A549 (cell line): ENCODE measurements at regions of chr17 and their contacts with region 1.

Region 1: DNA sequence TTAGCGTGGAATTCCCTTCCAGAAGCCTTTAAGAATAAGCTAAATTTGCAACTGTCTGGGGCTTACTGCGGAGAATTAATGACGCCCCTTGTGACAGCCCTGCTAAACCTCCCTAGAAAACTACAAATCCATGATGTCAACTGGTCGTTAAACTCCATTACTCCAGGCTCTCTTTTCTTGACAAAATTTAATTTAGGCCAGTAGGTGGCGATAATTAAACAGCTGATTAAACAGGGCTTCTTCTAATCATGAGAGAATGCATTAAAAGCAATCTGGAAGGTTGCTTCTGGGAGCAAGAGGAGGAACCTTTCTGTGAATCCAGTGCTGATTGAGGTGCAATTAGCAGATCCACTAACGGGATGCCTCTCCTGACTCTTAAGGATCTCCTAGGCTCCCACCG is 8.1 kb upstream of the NLRP1 start:
- DNase-seq: peak; percentile 49 to 53
- ATAC-seq: peak; percentile 45 to 70; a peak in 3 of 6 replicates
- H3K4me3 ChIP-seq: no peak overlapping the region
- H3K27ac ChIP-seq: no peak overlapping the region
- H3K4me1 ChIP-seq: no peaks in the 10 kb centered on the region
- CTCF ChIP-seq: peak; percentile 87
- EP300 ChIP-seq: no peak
- POLR2A ChIP-seq: no peak
- RAD21 ChIP-seq: peak; percentile 80 to 86

Region 2: DNA sequence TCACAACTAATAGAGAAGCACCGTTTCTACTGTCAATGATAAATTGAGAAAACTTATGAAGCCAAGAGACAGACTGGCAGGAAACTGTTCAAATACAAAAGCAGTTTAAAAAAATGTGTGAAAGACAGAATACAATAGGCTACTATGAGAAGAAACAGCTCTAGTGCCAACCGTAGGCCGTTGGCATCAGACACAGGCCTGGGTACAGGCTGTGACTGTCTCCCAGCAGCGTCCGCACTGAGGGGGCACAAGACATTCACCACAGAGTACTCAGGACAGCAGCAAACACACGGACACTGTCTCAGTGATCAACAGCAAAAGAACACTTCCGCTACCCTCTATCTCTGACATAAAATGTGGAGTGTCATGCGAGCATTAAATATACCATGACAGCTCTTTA is 145.6 kb before region 1 on chr17:
- CTCF ChIA-PET with region 1: no interaction called
- POLR2A ChIA-PET with region 1: no interaction called
- DNase-seq: no peak
- ATAC-seq: no peak
- H3K4me3 ChIP-seq: no peak overlapping the region
- H3K27ac ChIP-seq: no peak overlapping the region
- H3K4me1 ChIP-seq: no peaks in the 10 kb centered on the region
- CTCF ChIP-seq: no peak
- EP300 ChIP-seq: no peak
- POLR2A ChIP-seq: no peak
- RAD21 ChIP-seq: no peak

Region 3: DNA sequence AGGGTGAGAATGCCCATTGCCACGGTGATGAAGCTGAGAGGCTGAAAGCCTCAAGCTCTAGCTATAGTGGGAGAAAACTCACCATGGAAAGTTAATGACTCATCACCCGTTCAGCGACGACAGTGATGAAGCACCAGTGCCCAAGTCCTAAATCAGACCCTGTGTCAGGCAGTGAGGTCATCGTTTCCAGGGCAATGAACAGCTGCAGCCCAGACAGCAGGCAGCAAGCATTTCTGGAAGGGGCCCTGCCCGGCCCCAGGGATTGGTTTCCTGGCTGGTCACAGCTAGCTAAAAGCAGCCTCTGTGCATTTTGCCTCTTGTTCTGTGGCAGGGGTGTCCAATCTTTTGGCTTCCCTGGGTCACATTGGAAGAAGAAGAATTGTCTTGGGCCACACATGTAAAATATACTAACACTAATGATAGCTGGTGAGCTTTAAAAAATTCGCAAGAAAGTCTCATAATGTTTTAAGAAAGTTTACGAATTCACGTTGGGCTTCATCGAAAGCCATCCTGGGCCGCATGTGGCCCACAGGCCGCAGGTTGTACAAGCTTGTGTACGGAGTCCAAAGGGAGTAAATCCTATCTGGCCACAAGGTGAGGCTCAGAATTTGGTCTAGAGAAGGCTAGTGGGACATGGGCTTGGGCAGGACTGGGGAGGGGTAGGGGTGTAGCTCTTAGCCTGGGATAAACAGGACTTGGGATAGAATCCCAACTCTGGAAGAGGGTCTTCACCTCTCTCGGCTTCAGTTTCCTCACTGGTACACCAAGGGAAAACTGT is 65.4 kb before region 1 on chr17:
- CTCF ChIA-PET with region 1: interaction called, 11 read pairs
- POLR2A ChIA-PET with region 1: no interaction called
- DNase-seq: peak; percentile 81 to 90
- ATAC-seq: peak; percentile 90 to 93
- H3K4me3 ChIP-seq: no peak overlapping the region
- H3K27ac ChIP-seq: peak overlapping the region; percentile 41 to 68; a peak in 5 of 6 replicates
- H3K4me1 ChIP-seq: peaks cover 17% of the 10 kb centered on the region
- CTCF ChIP-seq: no peak
- EP300 ChIP-seq: no peak
- POLR2A ChIP-seq: no peak
- RAD21 ChIP-seq: no peak

Region 4: GRCh38 chr17:5610956-5611355 is 18.6 kb after region 1 on chr17:
- CTCF ChIA-PET with region 1: interaction called, 36 read pairs
- POLR2A ChIA-PET with region 1: no interaction called
- DNase-seq: no peak
- ATAC-seq: no peak
- H3K4me3 ChIP-seq: no peak overlapping the region
- H3K27ac ChIP-seq: no peak overlapping the region
- H3K4me1 ChIP-seq: no peaks in the 10 kb centered on the region
- CTCF ChIP-seq: no peak
- EP300 ChIP-seq: no peak
- POLR2A ChIP-seq: no peak
- RAD21 ChIP-seq: no peak

Region 5: DNA sequence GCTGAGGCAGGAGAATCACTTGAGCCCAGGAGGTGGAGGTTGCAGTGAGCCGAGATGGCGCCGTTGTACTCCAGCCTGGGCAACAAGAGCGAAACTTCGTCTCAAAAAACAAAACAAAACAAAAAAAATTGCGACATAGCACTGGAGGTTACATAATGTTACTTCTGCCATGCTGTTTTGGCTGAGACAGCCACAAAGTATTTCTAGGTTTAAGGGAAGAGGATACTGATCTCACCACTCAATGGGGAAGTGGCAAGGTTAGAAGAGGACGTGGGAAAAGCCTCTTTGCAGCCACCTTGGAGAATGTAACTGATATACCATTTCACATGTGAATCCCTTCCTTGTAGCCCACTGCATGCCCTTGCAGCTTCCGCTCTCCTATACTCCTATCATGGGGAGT is 123.1 kb after region 1 on chr17:
- CTCF ChIA-PET with region 1: no interaction called
- POLR2A ChIA-PET with region 1: no interaction called
- DNase-seq: no peak
- ATAC-seq: no peak
- H3K4me3 ChIP-seq: no peak overlapping the region
- H3K27ac ChIP-seq: no peak overlapping the region
- H3K4me1 ChIP-seq: peaks cover 10% of the 10 kb centered on the region; the same call in 2 of the 3 replicates
- CTCF ChIP-seq: no peak
- EP300 ChIP-seq: no peak
- POLR2A ChIP-seq: no peak
- RAD21 ChIP-seq: no peak

Region 6: GRCh38 chr17:6069539-6070429 is 477.4 kb after region 1 on chr17 and contains the start of gene WSCD1:
- CTCF ChIA-PET with region 1: interaction called, 12 read pairs
- POLR2A ChIA-PET with region 1: no interaction called
- DNase-seq: peak; percentile 21 to 57
- ATAC-seq: peak; percentile 41 to 72
- H3K4me3 ChIP-seq: peak within 1 kb of the TSS; percentile 66
- H3K27ac ChIP-seq: peak within 1 kb of the TSS; percentile 65 to 85
- H3K4me1 ChIP-seq: peaks cover 15% of the 10 kb centered on the region; the same call in 2 of the 3 replicates
- CTCF ChIP-seq: no peak
- EP300 ChIP-seq: no peak
- POLR2A ChIP-seq: no peak
- RAD21 ChIP-seq: no peak
- polyA plus RNA-seq, gene WSCD1: 1.6 and 1.9 TPM in 2 replicates

Region 7: DNA sequence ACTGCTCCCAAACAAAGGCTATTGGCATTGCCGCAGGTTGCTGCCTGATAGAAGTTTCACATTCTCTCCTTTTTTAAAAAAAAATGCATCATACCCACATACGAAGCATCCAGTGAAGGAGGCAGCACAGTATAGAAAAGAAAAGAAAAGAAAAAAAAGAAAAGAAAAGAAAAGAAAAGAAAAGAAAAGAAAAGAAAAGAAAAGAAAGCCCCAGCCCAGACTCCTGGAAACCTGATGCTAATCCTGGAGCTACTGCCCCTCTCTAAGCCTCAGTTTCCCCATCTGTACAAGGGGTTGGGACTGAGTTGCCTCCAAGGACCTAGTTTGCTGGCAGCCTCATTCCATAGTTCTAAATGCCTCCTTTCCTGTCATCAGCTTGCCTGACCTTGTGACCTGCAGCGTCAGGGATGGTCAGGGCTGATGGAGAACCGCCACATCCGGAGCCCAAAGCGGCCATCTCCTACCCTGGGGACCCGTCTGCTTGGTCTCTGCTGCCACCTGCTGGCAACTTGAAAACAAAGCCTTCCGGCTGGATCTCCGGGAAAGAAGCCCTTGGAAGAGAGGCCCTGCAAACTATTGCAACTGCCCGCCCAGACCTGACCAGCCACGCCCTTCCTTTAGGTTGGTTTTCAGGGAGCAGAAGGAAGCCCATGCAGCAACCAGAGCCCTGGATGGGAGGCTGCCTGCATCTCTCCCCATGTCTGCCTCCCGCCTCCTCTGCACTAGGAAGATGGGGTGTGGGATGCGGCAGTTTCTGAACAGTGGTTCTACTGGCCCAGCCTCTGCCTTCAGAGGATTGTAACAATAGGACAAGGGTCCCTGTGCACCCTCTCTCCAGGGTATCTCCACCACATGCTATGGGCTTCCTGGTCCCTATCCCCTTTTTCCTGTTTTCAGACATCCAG is 829.6 kb after region 1 on chr17:
- CTCF ChIA-PET with region 1: interaction called, 394 read pairs
- POLR2A ChIA-PET with region 1: no interaction called
- DNase-seq: peak; percentile 84 to 95
- ATAC-seq: peak; percentile 86 to 93
- H3K4me3 ChIP-seq: no peak overlapping the region
- H3K27ac ChIP-seq: no peak overlapping the region
- H3K4me1 ChIP-seq: no peaks in the 10 kb centered on the region
- CTCF ChIP-seq: peak; percentile 90
- EP300 ChIP-seq: no peak
- POLR2A ChIP-seq: no peak
- RAD21 ChIP-seq: peak; percentile 99